Activated CD4-positive, alpha-beta memory T cell treated with anti-CD3 and anti-CD28 coated beads, Interleukin-2, amount 10 ng/mL, durations not matched to agents 7 days and 5 days (primary cell): ENCODE measurements at regions of chr11 and their contacts with region 1.

Region 1: DNA sequence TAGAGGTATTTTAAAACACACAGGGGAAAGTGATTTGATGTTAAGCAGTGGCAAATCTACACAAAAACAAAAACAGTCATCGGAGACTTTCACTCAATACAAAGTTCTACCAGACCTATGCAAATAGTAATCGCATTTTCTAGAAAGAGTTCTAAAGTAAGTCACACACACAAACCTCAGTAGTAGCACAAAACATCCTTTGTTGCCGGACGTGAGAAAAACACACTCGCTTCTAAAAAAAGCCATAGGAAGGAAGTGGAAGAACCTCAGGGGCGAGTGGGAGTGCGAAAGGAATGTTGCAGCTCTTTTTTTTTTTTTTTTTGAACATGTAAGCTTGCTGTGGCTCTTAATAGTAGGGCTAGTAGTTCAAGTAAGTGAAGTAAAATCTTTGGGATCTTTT is 88.9 kb downstream of the MAML2 start:
- DNase-seq: peak; percentile 39
- H3K4me3 Mint-ChIP-seq: peak overlapping the region; percentile 63
- H3K27ac Mint-ChIP-seq: peak overlapping the region; percentile 77
- H3K4me1 Mint-ChIP-seq: peaks cover 71% of the 10 kb centered on the region
- H3K27me3 Mint-ChIP-seq: no peaks in the 10 kb centered on the region

Region 2: DNA sequence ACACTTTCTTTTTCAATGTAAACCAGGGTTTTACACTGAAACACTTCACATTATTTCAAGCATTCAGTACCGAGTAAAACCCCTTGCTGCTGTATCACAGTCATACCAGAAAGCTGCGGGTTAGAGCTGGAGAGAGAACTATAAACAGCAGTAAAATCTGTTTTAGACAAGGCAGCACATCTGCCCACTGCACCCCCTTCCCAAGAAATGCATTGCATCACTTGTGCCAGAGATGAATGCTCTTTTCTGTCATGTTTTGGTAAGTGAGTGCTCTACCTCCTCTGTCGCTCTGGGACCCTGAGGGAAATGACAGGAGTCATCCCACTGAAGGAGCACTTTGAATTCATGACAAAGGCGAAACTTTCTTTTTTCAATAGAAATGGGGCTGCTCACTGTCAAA is 18.3 kb before region 1 on chr11:
- CTCF ChIA-PET with region 1: interaction called, 3 read pairs
- POLR2A ChIA-PET with region 1: interaction called, 13 read pairs
- DNase-seq: peak; percentile 69
- H3K4me3 Mint-ChIP-seq: peak overlapping the region; percentile 33
- H3K27ac Mint-ChIP-seq: peak overlapping the region; percentile 58
- H3K4me1 Mint-ChIP-seq: peaks cover 13% of the 10 kb centered on the region
- H3K27me3 Mint-ChIP-seq: no peaks in the 10 kb centered on the region

Region 3: DNA sequence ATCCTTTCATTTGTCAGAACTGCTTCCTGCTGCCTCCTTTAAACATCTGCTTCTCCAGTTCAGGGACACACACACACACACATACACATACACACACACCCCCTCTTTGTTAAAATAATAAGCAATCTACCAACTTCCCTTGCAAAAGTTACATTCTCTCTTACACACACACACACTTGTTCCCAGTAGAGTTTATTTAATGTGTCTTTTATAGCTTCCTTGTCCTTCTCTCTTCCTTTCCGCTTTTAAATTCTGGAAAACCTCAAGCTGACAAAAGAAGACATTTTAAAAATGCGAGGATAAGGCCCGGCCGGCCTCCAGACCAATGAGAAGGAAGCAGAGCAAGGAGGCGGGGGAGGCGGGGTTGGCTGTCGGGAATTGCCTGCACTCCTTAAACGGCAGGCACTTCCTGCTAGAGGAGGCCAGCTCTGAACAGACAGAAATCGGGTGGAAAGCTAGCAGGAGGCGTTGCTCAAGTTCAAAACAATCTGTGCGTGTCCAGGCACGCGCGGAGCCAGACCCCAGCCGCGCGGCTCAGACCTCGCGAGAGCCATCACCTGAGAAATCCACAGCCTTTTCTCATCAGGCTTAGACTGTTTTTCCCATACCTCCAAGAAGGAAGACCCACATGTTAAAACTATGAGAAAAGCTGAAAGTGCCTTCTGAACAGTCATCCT is 11.0 kb before region 1 on chr11:
- CTCF ChIA-PET with region 1: interaction called, 12 read pairs
- POLR2A ChIA-PET with region 1: interaction called, 21 read pairs
- DNase-seq: peak; percentile 78
- H3K4me3 Mint-ChIP-seq: peak overlapping the region; percentile 70
- H3K27ac Mint-ChIP-seq: peak overlapping the region; percentile 79
- H3K4me1 Mint-ChIP-seq: peaks cover 54% of the 10 kb centered on the region
- H3K27me3 Mint-ChIP-seq: no peaks in the 10 kb centered on the region

Region 4: GRCh38 chr11:96267496-96268032 is 13.5 kb after region 1 on chr11:
- CTCF ChIA-PET with region 1: no interaction called
- POLR2A ChIA-PET with region 1: interaction called, 13 read pairs
- DNase-seq: peak; percentile 34
- H3K4me3 Mint-ChIP-seq: peak overlapping the region; percentile 46
- H3K27ac Mint-ChIP-seq: peak overlapping the region; percentile 76
- H3K4me1 Mint-ChIP-seq: peaks cover 61% of the 10 kb centered on the region
- H3K27me3 Mint-ChIP-seq: no peaks in the 10 kb centered on the region

Region 5: GRCh38 chr11:96314326-96315020 is 60.4 kb after region 1 on chr11:
- CTCF ChIA-PET with region 1: no interaction called
- POLR2A ChIA-PET with region 1: no interaction called
- DNase-seq: peak; percentile 22
- H3K4me3 Mint-ChIP-seq: peak overlapping the region; percentile 1
- H3K27ac Mint-ChIP-seq: peak overlapping the region; percentile 83
- H3K4me1 Mint-ChIP-seq: peaks cover 73% of the 10 kb centered on the region
- H3K27me3 Mint-ChIP-seq: no peaks in the 10 kb centered on the region